Posterior cingulate gyrus (tissue), 11 donors: ENCODE measurements at regions of chr11 and their contacts with region 1.

Region 1: GRCh38 chr11:103326070-103326794 is 217.0 kb downstream of the DYNC2H1 start:
- DNase-seq: peak in 3 of 10 donors; percentile 6 to 73 (median 64)

Region 2: DNA sequence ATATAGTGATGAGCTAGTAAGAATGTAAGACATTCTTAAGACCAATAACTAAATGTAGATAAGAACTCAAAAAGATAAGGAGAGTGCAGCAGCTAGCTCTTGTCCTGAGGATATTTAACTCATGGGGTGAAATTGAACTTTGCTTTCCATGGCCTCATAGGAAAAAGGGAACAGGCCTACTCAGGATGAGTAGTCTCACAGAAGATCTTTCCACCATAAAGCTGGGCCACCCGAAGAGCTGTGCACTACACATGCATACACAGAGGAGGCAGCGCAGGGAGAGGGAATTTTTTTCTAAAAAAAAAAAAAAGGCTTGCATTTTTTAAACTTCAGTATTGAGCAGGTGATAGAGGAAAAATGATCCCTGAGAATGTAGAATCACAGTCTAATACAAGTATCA is 1338.9 kb before region 1 on chr11:
- intact Hi-C with region 1: no loop called
- DNase-seq: no peak

Region 3: GRCh38 chr11:103295704-103296103 is 30.5 kb before region 1 on chr11:
- intact Hi-C with region 1: no loop called
- DNase-seq: peak in 1 of 10 donors; percentile 26

Region 4: GRCh38 chr11:103537904-103538502 is 211.8 kb after region 1 on chr11:
- intact Hi-C with region 1: loop called (anchors 5 kb)
- DNase-seq: no peak